GM12878 (cell line): ENCODE measurements at regions of chr14 and their contacts with region 1.

Region 1: GRCh38 chr14:22653012-22653621 is 9.0 kb upstream of the OR6J1 start:
- DNase-seq: no peak
- ATAC-seq: peak; percentile 89
- H3K4me3 ChIP-seq: no peak overlapping the region
- H3K27ac ChIP-seq: no peak overlapping the region
- H3K4me1 ChIP-seq: no peaks in the 10 kb centered on the region
- H3K27me3 ChIP-seq: no peaks in the 10 kb centered on the region
- CTCF ChIP-seq: peak; percentile 87 to 92 (median 88)
- EP300 ChIP-seq: no peak
- POLR2A ChIP-seq: no peak
- RAD21 ChIP-seq: peak; percentile 91

Region 2: DNA sequence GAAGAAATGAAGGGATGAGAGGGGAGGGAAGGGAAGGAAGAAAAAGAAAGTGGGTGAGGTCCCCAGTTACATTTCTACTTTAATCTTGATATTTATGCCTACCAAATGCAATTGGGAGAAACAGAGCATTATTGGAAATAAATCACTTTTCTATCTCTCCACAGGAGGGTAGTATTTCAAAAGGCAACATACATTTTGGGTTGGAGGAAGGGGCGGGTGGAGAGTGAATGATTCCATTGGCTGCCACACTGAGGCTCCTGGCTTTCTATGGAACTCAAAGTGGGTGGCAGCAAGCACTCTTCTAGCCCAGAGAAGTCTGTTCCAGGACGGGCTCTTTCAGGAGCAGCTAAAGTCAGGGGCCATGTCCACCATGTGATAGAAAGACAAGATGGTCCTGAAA is 505.4 kb before region 1 on chr14:
- CTCF ChIA-PET with region 1: no interaction called
- POLR2A ChIA-PET with region 1: no interaction called
- RAD21 ChIA-PET with region 1: no interaction called
- SMC1A ChIA-PET with region 1: no interaction called
- in situ Hi-C with region 1: no loop called
- intact Hi-C with region 1: no loop called
- DNase-seq: no peak
- ATAC-seq: no peak
- H3K4me3 ChIP-seq: no peak overlapping the region
- H3K27ac ChIP-seq: no peak overlapping the region
- H3K4me1 ChIP-seq: no peaks in the 10 kb centered on the region
- H3K27me3 ChIP-seq: peaks cover 0 to 3% of the 10 kb centered on the region in 2 experiments; a peak in 2 of 4 replicates
- CTCF ChIP-seq: 0 out of 6 replicates have a peak, but pooled peaks of 1 of the 3 experiments have one; percentile 5
- EP300 ChIP-seq: no peak
- POLR2A ChIP-seq: no peak
- RAD21 ChIP-seq: no peak

Region 3: GRCh38 chr14:22589096-22589839 is 63.8 kb before region 1 on chr14 and contains the start of gene DAD1:
- CTCF ChIA-PET with region 1: interaction called, 9 read pairs
- POLR2A ChIA-PET with region 1: interaction called, 3 read pairs
- RAD21 ChIA-PET with region 1: interaction called, 11 read pairs
- SMC1A ChIA-PET with region 1: interaction called, 3 read pairs
- in situ Hi-C with region 1: no loop called
- intact Hi-C with region 1: loop called (anchors 5 kb)
- DNase-seq: peak; percentile 100
- ATAC-seq: peak; percentile 93
- H3K4me3 ChIP-seq: peak within 1 kb of the TSS; percentile 92
- H3K27ac ChIP-seq: peak within 1 kb of the TSS; percentile 91
- H3K4me1 ChIP-seq: peaks cover 20% of the 10 kb centered on the region
- H3K27me3 ChIP-seq: no peaks in the 10 kb centered on the region; a peak in 1 of 4 replicates
- CTCF ChIP-seq: 0 out of 6 replicates have a peak, but pooled peaks of 1 of the 3 experiments have one; percentile 13
- EP300 ChIP-seq: no peak; a peak in 1 of 4 replicates
- POLR2A ChIP-seq: peak; percentile 98
- RAD21 ChIP-seq: no peak
- polyA plus RNA-seq, gene DAD1: 711 to 920 TPM

Region 4: DNA sequence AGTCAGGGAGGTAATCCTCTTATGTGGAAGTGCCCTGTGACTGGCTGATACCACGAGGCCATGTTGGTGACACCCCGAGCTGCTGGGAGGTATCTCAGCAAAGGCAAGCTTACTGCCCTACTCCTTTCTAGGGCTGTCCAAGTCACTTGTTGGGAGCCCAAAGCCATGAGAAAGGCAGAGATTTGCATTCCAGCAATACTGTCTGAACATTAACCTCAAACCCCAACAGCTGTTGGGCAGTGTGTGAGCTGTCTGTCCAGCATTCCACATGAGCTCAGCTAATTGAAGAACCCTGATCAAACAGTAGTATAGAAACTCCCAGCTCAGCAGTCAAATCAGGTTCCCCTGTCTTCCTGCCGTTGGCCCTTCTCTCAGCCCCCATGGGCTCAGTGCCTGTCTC is 45.8 kb before region 1 on chr14:
- CTCF ChIA-PET with region 1: no interaction called
- POLR2A ChIA-PET with region 1: no interaction called
- RAD21 ChIA-PET with region 1: no interaction called
- SMC1A ChIA-PET with region 1: no interaction called
- in situ Hi-C with region 1: no loop called
- intact Hi-C with region 1: no loop called
- DNase-seq: no peak
- ATAC-seq: no peak
- H3K4me3 ChIP-seq: no peak overlapping the region
- H3K27ac ChIP-seq: no peak overlapping the region
- H3K4me1 ChIP-seq: no peaks in the 10 kb centered on the region
- H3K27me3 ChIP-seq: no peaks in the 10 kb centered on the region
- CTCF ChIP-seq: no peak
- EP300 ChIP-seq: no peak
- POLR2A ChIP-seq: no peak
- RAD21 ChIP-seq: no peak

Region 5: GRCh38 chr14:22668417-22668816 is 15.3 kb after region 1 on chr14:
- CTCF ChIA-PET with region 1: interaction called, 4 read pairs
- POLR2A ChIA-PET with region 1: no interaction called
- RAD21 ChIA-PET with region 1: interaction called, 9 read pairs
- SMC1A ChIA-PET with region 1: interaction called, 13 read pairs
- in situ Hi-C with region 1: no loop called
- intact Hi-C with region 1: no loop called
- DNase-seq: no peak
- ATAC-seq: peak; percentile 79
- H3K4me3 ChIP-seq: no peak overlapping the region
- H3K27ac ChIP-seq: no peak overlapping the region
- H3K4me1 ChIP-seq: no peaks in the 10 kb centered on the region
- H3K27me3 ChIP-seq: no peaks in the 10 kb centered on the region
- CTCF ChIP-seq: no peak
- EP300 ChIP-seq: no peak
- POLR2A ChIP-seq: no peak
- RAD21 ChIP-seq: no peak

Region 6: GRCh38 chr14:22713631-22713950 is 60.5 kb after region 1 on chr14:
- CTCF ChIA-PET with region 1: interaction called, 5 read pairs
- POLR2A ChIA-PET with region 1: no interaction called
- RAD21 ChIA-PET with region 1: interaction called, 5 read pairs
- SMC1A ChIA-PET with region 1: no interaction called
- in situ Hi-C with region 1: no loop called
- intact Hi-C with region 1: loop called (anchors 5 kb)
- DNase-seq: no peak
- ATAC-seq: no peak
- H3K4me3 ChIP-seq: peak overlapping the region; percentile 70
- H3K27ac ChIP-seq: no peak overlapping the region; the same call in 1 of the 2 replicates
- H3K4me1 ChIP-seq: peaks cover 3% of the 10 kb centered on the region; the same call in 1 of the 2 replicates
- H3K27me3 ChIP-seq: no peaks in the 10 kb centered on the region
- CTCF ChIP-seq: no peak
- EP300 ChIP-seq: no peak
- POLR2A ChIP-seq: no peak
- RAD21 ChIP-seq: no peak

Region 7: GRCh38 chr14:22766456-22767322 is 113.6 kb after region 1 on chr14 and contains the start of gene OXA1L:
- CTCF ChIA-PET with region 1: interaction called, 11 read pairs
- POLR2A ChIA-PET with region 1: no interaction called
- RAD21 ChIA-PET with region 1: interaction called, 31 read pairs
- SMC1A ChIA-PET with region 1: interaction called, 18 read pairs
- in situ Hi-C with region 1: no loop called
- intact Hi-C with region 1: no loop called
- DNase-seq: peak; percentile 92
- ATAC-seq: peak; percentile 89
- H3K4me3 ChIP-seq: peak within 1 kb of the TSS; percentile 91
- H3K27ac ChIP-seq: peak within 1 kb of the TSS; percentile 98
- H3K4me1 ChIP-seq: no peaks in the 10 kb centered on the region; the same call in 1 of the 2 replicates
- H3K27me3 ChIP-seq: no peaks in the 10 kb centered on the region
- CTCF ChIP-seq: no peak
- EP300 ChIP-seq: no peak
- POLR2A ChIP-seq: peak; percentile 92
- RAD21 ChIP-seq: no peak
- polyA plus RNA-seq, gene OXA1L: 110 to 116 TPM

Region 8: GRCh38 chr14:22814941-22815713 is 162.0 kb after region 1 on chr14 and contains the start of gene SLC7A7:
- CTCF ChIA-PET with region 1: interaction called, 25 read pairs
- POLR2A ChIA-PET with region 1: no interaction called
- RAD21 ChIA-PET with region 1: interaction called, 6 read pairs
- SMC1A ChIA-PET with region 1: interaction called, 4 read pairs
- in situ Hi-C with region 1: no loop called
- intact Hi-C with region 1: no loop called
- DNase-seq: no peak
- ATAC-seq: peak; percentile 6
- H3K4me3 ChIP-seq: peak within 1 kb of the TSS; percentile 66
- H3K27ac ChIP-seq: peak within 1 kb of the TSS; percentile 75
- H3K4me1 ChIP-seq: peaks cover 28% of the 10 kb centered on the region
- H3K27me3 ChIP-seq: no peaks in the 10 kb centered on the region
- CTCF ChIP-seq: no peak
- EP300 ChIP-seq: no peak
- POLR2A ChIP-seq: no peak
- RAD21 ChIP-seq: no peak
- polyA plus RNA-seq, gene SLC7A7: 48.1 to 72.7 TPM

Region 9: DNA sequence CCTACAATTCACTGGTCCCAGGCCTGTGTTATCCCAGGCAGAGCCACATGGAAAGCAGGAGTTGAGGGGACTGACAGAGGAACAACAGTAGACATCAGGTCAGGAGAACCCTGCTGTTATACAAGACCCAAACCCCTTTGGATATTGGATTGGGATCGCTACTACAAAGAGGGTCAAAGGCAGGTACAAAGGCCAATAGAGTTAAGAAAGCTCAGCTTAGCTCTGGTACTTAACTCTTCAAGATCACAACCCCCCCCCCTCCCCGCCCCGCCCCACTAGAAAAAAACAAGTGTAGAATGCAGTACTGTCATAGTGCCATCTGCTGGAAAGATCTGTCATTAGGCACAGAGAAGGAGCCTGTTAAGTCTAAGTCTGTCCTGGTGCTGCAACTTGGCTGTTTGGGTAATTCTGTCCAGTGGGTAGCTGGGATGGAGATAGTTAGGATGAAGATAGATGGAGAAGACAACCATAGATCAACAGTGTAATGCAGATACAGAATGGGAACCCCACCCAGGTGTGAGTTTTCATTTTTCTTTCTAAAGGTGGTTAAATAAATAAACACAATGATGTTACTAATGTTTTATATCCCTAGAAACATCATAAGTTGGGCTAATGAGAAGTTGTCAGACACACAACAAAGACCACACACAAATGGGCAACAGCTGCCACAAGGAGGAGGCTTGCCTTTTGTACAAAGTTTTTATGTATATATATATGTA is 247.1 kb after region 1 on chr14:
- CTCF ChIA-PET with region 1: interaction called, 16 read pairs
- POLR2A ChIA-PET with region 1: no interaction called
- RAD21 ChIA-PET with region 1: interaction called, 3 read pairs
- SMC1A ChIA-PET with region 1: interaction called, 4 read pairs
- in situ Hi-C with region 1: no loop called
- intact Hi-C with region 1: no loop called
- DNase-seq: peak; percentile 47
- ATAC-seq: peak; percentile 95
- H3K4me3 ChIP-seq: no peak overlapping the region
- H3K27ac ChIP-seq: no peak overlapping the region
- H3K4me1 ChIP-seq: no peaks in the 10 kb centered on the region
- H3K27me3 ChIP-seq: no peaks in the 10 kb centered on the region
- CTCF ChIP-seq: peak; percentile 65 to 76 (median 69)
- EP300 ChIP-seq: no peak
- POLR2A ChIP-seq: no peak
- RAD21 ChIP-seq: peak; percentile 89